GM10248 (cell line): ENCODE measurements at regions of chr19 and their contacts with region 1.

Region 1: DNA sequence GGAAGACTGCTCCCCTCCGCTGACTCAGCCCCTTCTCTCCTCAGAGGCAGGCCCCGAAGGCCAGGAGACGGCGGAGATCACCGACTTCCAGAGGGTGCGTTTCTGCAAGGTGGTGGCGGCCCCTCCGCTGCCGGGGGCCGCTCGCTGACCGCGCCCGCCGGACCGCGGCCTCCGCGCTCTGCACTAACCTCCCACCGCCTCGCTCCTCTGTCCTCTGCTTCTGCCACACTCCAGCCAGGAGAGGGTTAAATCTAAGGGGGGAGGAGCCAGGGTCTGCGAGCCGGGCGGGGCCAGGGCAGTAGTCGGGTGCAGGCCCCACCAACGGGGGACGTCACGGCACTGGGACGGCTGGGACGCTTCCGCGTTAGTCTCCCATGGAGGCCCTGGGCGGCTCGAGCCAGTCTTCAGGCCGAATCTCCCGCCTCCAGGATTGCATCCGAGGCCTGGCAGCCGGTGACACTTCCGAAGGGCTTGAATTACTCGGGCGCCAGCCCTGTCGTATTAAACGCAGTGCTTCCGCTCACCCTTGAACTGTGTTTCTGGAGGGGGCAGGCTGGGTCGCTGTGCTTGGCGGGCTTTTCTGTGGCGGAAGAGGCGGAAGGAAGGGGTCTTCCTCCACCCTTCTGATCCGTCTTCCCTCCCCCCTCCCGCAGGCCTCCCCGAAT is 1.2 kb upstream of the INAFM1 start:
- DNase-seq: peak; percentile 93
- CTCF ChIP-seq: no peak

Region 2: DNA sequence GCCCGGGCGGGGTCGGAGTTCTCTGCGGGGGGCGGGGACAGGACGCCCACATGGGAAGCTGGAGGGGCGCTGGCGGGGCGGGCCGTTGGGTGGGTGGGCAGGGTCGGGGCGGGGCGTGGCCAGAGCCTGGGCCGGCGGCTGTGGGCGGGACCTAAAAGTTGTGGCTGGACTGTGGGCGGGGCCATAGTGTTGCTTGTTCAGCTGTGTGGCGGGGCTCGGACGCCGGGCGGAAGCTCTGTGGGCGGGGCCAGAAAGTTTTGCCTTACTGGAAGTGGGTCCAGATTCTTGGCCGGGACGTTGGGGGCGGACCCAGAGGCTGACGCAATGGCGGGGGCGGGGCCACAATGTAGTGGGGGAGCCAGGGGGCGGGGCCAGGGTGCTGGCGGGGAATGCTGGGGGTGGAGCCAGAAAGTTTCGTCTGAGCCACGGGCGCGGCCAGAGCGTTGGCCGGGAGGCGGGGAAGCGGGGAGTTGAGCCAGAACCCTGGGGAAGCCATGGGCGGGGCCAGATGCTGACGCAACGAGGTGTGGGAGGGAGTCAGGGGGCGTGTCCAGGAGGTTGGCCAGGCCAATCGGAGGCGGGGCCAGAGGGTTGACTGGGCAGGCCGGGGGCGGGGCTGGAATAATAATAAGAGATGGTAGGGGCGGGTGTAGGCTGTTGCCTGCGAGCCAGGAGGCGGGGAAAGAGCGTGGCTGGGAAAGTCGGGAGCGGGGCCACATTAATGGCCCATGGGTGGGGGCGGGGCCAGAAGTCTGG is 16.6 kb before region 1 on chr19:
- CTCF ChIA-PET with region 1: interaction called, 6 read pairs
- POLR2A ChIA-PET with region 1: interaction called, 30 read pairs
- DNase-seq: peak; percentile 99
- CTCF ChIP-seq: no peak